IMR-90 (cell line): ENCODE measurements at regions of chr12 and their contacts with region 1.

Region 1: GRCh38 chr12:12432364-12432763 is 75.5 kb downstream of the BORCS5 start:
- DNase-seq: peak; percentile 96
- ATAC-seq: peak; percentile 77
- H3K4me3 ChIP-seq: no peak overlapping the region
- H3K27ac ChIP-seq: peak overlapping the region; percentile 38; the same call in 1 of the 2 replicates
- H3K4me1 ChIP-seq: peaks cover 20% of the 10 kb centered on the region
- H3K27me3 ChIP-seq: no peaks in the 10 kb centered on the region
- CTCF ChIP-seq: no peak
- POLR2A ChIP-seq: no peak
- RAD21 ChIP-seq: no peak

Region 2: DNA sequence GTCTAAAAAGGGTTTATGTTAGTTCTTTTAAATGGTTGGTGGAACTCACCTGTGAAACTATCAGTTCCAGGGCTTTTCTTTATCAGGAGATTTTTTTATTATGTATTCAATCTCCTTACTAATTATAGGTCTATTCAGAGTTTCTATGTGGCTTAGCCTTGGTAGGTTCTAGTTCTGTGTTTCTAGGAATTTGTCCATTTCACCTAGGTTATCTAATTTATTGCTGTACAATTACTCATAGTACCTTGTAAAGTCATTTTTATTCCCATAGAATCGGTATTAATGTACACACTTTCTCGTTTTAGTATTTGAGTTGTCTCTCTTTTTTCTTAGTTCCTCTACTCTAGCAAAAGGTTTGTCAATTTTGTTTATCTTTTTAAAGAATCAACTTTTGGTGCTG is 16.5 kb before region 1 on chr12:
- CTCF ChIA-PET with region 1: interaction called, 10 read pairs
- POLR2A ChIA-PET with region 1: no interaction called
- dilution Hi-C with region 1: no loop called
- in situ Hi-C with region 1: no loop called
- intact Hi-C with region 1: no loop called
- DNase-seq: no peak
- ATAC-seq: no peak
- H3K4me3 ChIP-seq: no peak overlapping the region
- H3K27ac ChIP-seq: no peak overlapping the region
- H3K4me1 ChIP-seq: no peaks in the 10 kb centered on the region
- H3K27me3 ChIP-seq: no peaks in the 10 kb centered on the region
- CTCF ChIP-seq: no peak
- POLR2A ChIP-seq: no peak
- RAD21 ChIP-seq: no peak

Region 3: DNA sequence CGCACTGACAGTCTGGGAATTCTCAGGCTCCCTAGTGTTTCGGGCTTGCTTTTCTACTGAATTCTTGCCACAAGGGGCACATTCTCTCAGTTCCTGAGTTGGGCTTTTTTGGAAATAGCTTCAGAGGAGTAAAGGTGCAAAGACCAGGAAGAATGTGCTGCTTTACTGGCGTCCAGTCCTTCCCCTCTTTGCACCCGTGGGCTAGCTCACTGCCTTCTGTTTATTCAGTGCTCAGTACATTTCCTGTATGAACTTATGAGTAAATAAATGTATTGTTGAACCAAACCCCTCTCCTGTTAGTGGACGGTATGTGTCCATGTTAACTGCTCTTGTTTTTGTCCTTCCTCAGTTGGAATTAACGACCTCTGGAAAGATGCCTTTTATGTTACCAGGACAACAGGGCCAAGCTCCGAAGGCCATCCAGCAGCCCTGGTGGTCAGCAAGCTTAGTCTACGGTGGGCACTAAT is 647.1 kb after region 1 on chr12:
- CTCF ChIA-PET with region 1: no interaction called
- POLR2A ChIA-PET with region 1: no interaction called
- dilution Hi-C with region 1: no loop called
- in situ Hi-C with region 1: no loop called
- intact Hi-C with region 1: no loop called
- DNase-seq: no peak
- ATAC-seq: no peak
- H3K4me3 ChIP-seq: no peak overlapping the region
- H3K27ac ChIP-seq: no peak overlapping the region
- H3K4me1 ChIP-seq: peaks cover 7% of the 10 kb centered on the region
- H3K27me3 ChIP-seq: no peaks in the 10 kb centered on the region
- CTCF ChIP-seq: no peak
- POLR2A ChIP-seq: no peak
- RAD21 ChIP-seq: no peak